Activated B cell treated with CpG ODN at 0.5 μM for 24 hours (primary cell): ENCODE measurements at regions of chr2 and their contacts with region 1.

Region 1: GRCh38 chr2:44087036-44087713 is 81.5 kb upstream of the PPM1B start:
- DNase-seq: peak; percentile 74
- ATAC-seq: peak; percentile 86
- H3K4me3 Mint-ChIP-seq: peak overlapping the region; percentile 83
- H3K27ac Mint-ChIP-seq: peak overlapping the region; percentile 3
- H3K4me1 Mint-ChIP-seq: peaks cover 27% of the 10 kb centered on the region
- H3K27me3 Mint-ChIP-seq: no peaks in the 10 kb centered on the region
- CTCF ChIP-seq: peak; percentile 27

Region 2: GRCh38 chr2:43689989-43690388 is 397.2 kb before region 1 on chr2:
- CTCF ChIA-PET with region 1: no interaction called
- POLR2A ChIA-PET with region 1: no interaction called
- intact Hi-C with region 1: no loop called
- DNase-seq: no peak
- ATAC-seq: no peak
- H3K4me3 Mint-ChIP-seq: no peak overlapping the region
- H3K27ac Mint-ChIP-seq: no peak overlapping the region
- H3K4me1 Mint-ChIP-seq: peaks cover 7% of the 10 kb centered on the region
- H3K27me3 Mint-ChIP-seq: peaks cover 8% of the 10 kb centered on the region
- CTCF ChIP-seq: no peak

Region 3: DNA sequence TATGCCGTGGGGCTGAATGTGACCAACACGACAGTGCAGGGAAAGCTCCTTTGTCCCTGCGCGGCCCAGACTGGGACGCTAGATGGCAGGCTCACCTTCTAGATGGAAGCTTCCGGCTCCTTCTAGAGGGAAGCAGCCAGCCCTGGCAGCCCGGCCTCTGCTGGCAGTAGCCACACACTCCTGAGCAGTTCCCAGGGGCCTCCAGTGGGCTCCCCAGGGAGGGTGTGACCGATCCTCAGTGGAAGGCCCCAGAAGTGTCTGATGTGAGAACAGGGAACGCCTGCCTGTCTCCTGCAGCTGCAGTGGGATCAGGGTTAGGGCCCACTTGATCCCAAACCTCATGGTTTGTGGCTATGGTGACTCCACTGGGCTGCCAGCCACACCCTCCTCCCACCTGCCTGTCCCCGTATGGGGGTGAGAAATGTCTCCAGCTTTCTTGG is 42.9 kb before region 1 on chr2:
- CTCF ChIA-PET with region 1: interaction called, 3 read pairs
- POLR2A ChIA-PET with region 1: no interaction called
- intact Hi-C with region 1: loop called (anchors 2 kb)
- DNase-seq: peak; percentile 67
- ATAC-seq: peak; percentile 100
- H3K4me3 Mint-ChIP-seq: no peak overlapping the region
- H3K27ac Mint-ChIP-seq: no peak overlapping the region
- H3K4me1 Mint-ChIP-seq: peaks cover 2% of the 10 kb centered on the region
- H3K27me3 Mint-ChIP-seq: peaks cover 3% of the 10 kb centered on the region
- CTCF ChIP-seq: peak; percentile 35

Region 4: DNA sequence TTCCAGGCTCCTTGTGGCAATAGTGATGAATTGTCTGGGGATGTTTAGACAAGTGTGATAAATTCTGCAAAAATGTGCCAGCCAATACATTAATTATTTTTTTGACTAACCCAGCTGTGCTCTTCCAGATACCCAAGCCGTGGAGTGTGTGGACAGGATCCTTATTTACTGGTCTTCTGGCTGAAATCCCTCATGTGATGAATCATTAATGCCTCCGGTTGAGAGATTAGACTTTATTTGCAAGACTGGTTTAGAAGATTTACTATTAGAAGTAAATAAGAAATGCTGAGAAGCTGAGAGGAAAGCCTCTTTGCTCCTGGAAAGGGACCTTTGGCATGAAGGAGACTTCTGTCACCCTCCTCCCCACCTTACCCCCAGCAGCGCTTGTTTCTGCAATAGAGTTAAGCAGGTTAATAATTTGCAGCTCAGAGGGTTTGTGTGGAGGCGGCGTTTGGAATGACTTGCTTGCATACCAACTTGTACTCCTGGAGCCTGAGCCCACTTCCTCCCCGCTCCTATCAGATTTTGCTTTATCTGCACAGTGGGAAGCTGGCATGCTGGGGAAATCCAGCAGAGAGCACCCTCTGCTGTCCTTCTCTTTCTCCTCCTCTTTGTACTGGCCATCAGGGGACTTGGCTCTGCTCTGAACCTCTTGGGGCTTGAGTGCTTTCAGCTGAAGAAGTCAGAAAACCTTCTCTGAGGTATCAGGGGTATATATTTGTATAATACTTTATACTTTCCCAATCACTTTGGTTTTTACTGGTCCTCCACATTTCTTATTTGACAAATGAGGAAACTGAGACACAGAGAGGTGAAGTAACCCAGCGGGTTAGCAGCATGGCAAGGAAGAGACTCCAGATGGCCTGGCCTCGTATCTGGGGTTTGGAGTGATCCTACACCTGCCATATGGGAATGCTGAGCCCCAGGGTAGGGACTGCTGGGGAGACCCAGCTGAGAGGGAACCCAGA is 204.4 kb after region 1 on chr2:
- CTCF ChIA-PET with region 1: no interaction called
- POLR2A ChIA-PET with region 1: no interaction called
- intact Hi-C with region 1: loop called (anchors 2 kb)
- DNase-seq: no peak
- ATAC-seq: no peak
- H3K4me3 Mint-ChIP-seq: no peak overlapping the region
- H3K27ac Mint-ChIP-seq: no peak overlapping the region
- H3K4me1 Mint-ChIP-seq: peaks cover 8% of the 10 kb centered on the region
- H3K27me3 Mint-ChIP-seq: peaks cover 16% of the 10 kb centered on the region
- CTCF ChIP-seq: no peak

Region 5: DNA sequence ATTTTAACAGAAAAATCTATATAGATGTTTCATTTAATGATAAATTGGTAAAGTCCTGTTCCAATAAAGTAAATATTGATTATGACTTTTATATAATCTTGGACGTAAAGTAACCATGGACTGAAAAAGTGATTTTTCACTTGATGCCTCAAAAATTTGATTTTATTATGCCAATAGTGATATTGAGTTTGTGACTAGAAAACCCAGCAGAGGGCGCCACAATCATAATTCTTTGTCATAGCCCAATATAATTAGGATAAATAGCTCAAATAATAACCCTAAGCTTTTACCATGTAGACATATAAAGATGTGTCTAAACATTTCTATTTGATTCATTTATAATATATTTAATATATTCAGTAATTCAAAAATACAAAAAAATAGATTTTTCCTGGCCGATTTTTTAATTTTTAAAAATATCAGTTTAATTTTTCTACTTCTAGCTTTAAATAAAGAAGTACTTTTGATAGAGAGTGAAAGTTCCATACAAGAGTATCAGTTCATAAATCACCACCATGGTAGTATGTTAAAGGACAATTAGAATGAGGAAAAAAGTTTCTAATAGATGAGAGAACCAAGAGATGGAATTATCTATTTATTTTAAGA is 305.3 kb after region 1 on chr2:
- CTCF ChIA-PET with region 1: interaction called, 4 read pairs
- POLR2A ChIA-PET with region 1: no interaction called
- intact Hi-C with region 1: loop called (anchors 2 kb)
- DNase-seq: no peak
- ATAC-seq: no peak
- H3K4me3 Mint-ChIP-seq: no peak overlapping the region
- H3K27ac Mint-ChIP-seq: no peak overlapping the region
- H3K4me1 Mint-ChIP-seq: peaks cover 3% of the 10 kb centered on the region
- H3K27me3 Mint-ChIP-seq: no peaks in the 10 kb centered on the region
- CTCF ChIP-seq: peak; percentile 81

Region 6: DNA sequence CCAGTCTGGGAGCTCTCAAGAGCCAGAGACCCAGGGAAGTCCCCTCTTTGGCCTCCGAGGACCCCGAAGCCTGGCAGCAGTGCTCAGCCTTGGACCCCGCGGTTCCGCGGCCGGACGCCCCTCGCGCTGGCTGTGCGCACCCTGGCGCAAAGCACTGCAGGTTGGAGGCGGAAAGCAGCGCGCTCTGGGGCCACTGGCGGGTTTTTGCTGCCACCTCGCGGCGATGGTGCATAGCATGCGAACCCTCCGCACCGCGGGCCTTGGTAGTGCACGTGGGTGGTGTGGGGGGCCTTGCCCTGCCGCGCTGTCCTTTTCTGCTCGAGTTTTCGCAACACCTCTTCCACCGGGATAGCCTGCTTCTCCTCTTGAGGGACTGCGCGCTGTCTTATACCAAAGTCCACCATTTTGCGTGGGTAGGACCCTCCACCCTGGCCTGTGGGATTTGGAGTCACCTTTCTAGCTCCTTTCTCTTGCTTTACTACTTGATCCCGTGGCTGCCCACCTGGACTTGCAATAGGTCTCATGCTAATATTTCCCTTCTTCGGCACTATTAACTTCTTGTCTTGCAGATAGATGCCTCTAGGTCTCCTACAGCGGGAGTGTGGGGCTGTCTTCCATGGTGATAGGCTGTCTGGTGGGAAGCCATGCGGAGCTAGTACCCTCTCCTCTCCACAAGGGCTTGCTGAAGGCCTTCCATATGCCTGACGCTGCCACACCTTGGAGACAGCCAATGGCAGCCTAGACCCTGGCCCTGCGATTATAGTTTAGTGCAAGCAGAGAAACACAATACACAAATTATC is 868.6 kb after region 1 on chr2:
- CTCF ChIA-PET with region 1: no interaction called
- POLR2A ChIA-PET with region 1: no interaction called
- intact Hi-C with region 1: loop called (anchors 1 kb)
- DNase-seq: peak; percentile 79
- ATAC-seq: peak; percentile 86
- H3K4me3 Mint-ChIP-seq: peak overlapping the region; percentile 63
- H3K27ac Mint-ChIP-seq: no peak overlapping the region
- H3K4me1 Mint-ChIP-seq: peaks cover 38% of the 10 kb centered on the region
- H3K27me3 Mint-ChIP-seq: peaks cover 67% of the 10 kb centered on the region
- CTCF ChIP-seq: peak; percentile 79